Posterior vena cava (tissue), 2 donors: ENCODE measurements at regions of chr18 and their contacts with region 1.

Region 1: GRCh38 chr18:3281456-3282400 is 19.8 kb downstream of the MYL12B start:
- DNase-seq: no peak

Region 2: DNA sequence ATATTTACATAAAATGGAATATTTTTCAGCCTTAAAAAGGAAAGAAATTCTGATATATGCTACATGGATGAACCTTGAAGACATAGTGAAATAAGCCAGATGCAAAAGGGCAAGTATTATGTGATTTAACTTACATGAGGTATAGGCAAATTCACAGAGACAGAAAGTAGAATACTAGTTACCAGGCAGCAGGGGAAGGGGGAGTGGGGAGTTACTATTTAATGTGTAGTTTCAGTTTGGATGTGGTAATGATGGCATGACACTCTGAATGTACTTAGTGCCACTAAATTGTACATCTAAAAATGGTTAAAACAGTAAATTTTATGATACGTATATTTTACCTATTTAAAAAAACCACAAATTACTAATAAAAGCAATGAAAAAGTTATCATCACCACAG is 722.5 kb before region 1 on chr18:
- intact Hi-C with region 1: no loop called
- DNase-seq: no peak

Region 3: GRCh38 chr18:2985628-2986027 is 296.1 kb before region 1 on chr18:
- intact Hi-C with region 1: no loop called
- DNase-seq: no peak

Region 4: GRCh38 chr18:3217948-3218647 is 63.6 kb before region 1 on chr18:
- intact Hi-C with region 1: no loop called
- DNase-seq: no peak

Region 5: GRCh38 chr18:3261371-3262246 is 20.1 kb before region 1 on chr18 and contains the start of gene MYL12B:
- intact Hi-C with region 1: no loop called
- DNase-seq: peak; percentile 96
- total RNA-seq, gene MYL12B: 243 to 267 TPM

Region 6: GRCh38 chr18:3585656-3586509 is 304.2 kb after region 1 on chr18:
- intact Hi-C with region 1: loop called (anchors 10 kb)
- DNase-seq: peak; percentile 92

Region 7: DNA sequence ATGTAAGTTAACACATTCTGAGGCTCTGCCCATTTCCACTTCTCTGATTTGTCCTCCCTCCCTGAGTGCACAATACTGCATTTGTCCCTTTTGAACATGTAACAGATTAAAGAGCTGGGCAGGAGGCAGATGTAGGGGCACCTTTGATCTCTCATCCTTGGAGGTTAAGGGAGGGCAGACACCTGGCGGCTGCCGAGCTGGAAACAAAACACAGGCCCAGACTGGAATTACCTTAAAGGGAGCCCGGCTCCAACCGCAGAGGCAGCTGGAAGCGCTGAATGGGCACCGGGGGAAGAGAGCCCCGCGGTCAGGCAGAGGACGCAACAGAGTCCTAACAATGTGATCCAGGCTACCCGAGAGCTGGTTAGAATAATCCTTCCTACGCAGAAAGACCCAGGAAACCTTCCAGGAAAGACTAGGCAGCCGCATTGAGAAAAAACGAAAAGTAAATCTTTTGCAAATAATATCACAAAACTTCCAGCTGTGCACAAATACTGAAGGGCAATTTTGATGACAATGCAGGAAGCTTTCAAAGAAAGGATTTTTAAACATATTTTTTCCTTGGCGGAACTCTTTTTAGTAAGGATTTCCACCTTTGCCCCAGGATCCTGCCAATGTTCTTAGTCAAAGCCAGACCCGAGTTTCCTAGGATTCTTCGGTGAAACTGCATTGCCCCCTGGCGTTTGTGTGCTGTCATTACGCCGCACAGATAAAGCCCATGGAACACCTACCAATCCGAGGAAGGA is 384.2 kb after region 1 on chr18:
- intact Hi-C with region 1: loop called (anchors 1 to 2 kb)
- DNase-seq: peak; percentile 93